Adrenal gland (tissue), 19 donors: ENCODE measurements at regions of chr6 and their contacts with region 1.

Region 1: DNA sequence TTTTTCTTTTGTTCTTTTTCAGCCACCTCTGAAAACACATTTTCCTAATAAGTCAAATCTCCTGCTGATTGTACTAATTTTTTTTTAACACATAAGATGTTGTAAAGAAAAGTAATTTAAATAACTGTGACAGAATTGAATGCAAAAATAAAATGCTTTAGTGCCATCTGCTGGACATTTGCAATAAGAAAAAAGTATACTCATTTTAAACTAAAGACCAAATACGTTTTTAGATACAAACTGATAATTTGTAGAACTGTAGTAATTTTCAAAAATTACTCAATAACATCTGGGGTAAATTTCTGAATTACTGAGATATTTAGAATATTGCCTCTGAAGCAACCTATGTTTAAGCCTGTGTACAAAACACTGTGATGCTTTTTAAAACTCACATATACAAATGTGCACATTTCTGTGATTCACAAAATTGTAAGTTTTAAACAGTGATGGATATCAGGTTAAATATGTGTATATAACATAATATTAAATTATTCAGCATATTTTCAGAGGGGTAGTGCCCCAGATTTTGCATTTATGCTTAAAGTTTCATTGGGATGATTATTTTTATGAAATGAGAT is 198.7 kb downstream of the RIMS1 start:
- DNase-seq: no peak
- H3K4me3 ChIP-seq: no peak overlapping the region
- H3K27ac ChIP-seq: no peak overlapping the region
- H3K4me1 ChIP-seq: no peaks in the 10 kb centered on the region
- H3K27me3 ChIP-seq: no peaks in the 10 kb centered on the region
- CTCF ChIP-seq: peak in 5 of 6 experiments; percentile 30 to 59 (median 38)
- POLR2A ChIP-seq: no peak

Region 2: DNA sequence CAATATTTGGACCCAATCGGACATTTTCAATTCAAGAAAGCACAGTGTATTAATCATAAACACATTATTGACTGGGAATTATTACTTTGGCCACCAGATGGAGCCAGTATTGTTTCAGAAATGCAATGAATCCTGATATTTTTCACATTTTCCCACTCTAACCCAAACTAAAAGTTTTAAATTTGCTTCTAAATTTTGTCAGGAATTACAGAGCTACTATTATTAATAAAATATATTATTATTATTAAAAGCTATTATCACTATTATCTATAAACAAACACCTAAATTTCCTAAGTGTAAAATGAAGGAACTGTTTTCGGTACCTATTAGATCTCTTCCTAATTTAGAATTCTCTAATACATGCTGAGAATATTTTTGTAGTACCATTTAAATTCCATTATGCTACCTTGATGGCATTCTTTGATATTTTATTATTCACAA is 551.1 kb before region 1 on chr6:
- intact Hi-C with region 1: loop called in 1 of 2 experiments (anchors 5 kb)
- DNase-seq: no peak
- H3K4me3 ChIP-seq: no peak overlapping the region
- H3K27ac ChIP-seq: no peak overlapping the region
- H3K4me1 ChIP-seq: no peaks in the 10 kb centered on the region
- H3K27me3 ChIP-seq: no peaks in the 10 kb centered on the region
- CTCF ChIP-seq: peak; percentile 27 to 73 (median 50)
- POLR2A ChIP-seq: no peak

Region 3: DNA sequence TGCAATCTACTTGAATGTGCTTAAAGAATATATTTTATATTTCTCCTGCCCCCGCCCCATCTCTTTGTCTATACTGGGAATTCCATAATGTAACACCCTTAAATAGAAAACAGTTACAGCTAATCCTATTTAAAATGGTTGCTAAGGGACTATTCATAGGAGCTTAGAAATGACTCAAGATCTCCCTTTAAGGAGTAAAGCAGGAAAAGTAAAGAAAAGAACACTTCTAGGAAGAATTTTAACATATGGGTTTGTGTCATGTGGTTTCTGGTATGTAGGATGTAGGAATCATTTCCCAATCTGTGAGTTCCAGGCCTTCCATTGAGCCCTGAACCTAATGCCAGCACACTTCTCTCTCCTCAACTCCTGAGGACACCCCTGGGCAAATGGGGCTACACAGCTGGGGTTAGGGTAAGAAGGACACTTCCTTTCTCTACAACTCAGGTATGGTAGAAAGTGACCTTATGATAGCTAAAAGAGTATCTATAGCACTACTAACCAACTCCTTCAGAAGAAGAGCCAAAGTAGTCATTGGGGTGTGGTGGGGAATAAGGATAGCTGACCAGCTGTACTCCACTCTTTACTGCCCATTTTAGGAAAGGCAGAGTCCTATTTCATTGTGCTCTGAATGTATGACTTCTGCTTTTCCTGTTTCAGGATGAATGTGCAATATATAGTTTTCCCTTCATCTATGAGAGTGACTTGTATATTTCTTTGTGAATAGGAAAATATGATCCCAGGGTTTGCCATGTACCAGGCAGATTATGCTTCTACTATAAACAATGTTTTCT is 171.4 kb before region 1 on chr6:
- intact Hi-C with region 1: no loop called
- DNase-seq: no peak
- H3K4me3 ChIP-seq: peak overlapping the region in 1 of 4 donors; percentile 6
- H3K27ac ChIP-seq: no peak overlapping the region
- H3K4me1 ChIP-seq: no peaks in the 10 kb centered on the region
- H3K27me3 ChIP-seq: no peaks in the 10 kb centered on the region
- CTCF ChIP-seq: no peak
- POLR2A ChIP-seq: no peak